AG04449 (cell line): ENCODE measurements at regions of chr5 and their contacts with region 1.

Region 1: GRCh38 chr5:181223058-181223728 is at the start of gene TRIM41:
- DNase-seq: peak; percentile 86
- H3K4me3 ChIP-seq: peak within 1 kb of the TSS; percentile 96
- CTCF ChIP-seq: no peak

Region 2: GRCh38 chr5:181191529-181192394 is 31.4 kb before region 1 on chr5:
- CTCF ChIA-PET with region 1: interaction called, 7 read pairs
- POLR2A ChIA-PET with region 1: interaction called, 14 read pairs
- DNase-seq: no peak
- H3K4me3 ChIP-seq: peak overlapping the region; percentile 90
- CTCF ChIP-seq: no peak

Region 3: GRCh38 chr5:181207214-181208107 is 15.7 kb before region 1 on chr5:
- CTCF ChIA-PET with region 1: interaction called, 4 read pairs
- POLR2A ChIA-PET with region 1: interaction called, 10 read pairs
- DNase-seq: peak; percentile 71
- H3K4me3 ChIP-seq: peak overlapping the region; percentile 57
- CTCF ChIP-seq: no peak

Region 4: DNA sequence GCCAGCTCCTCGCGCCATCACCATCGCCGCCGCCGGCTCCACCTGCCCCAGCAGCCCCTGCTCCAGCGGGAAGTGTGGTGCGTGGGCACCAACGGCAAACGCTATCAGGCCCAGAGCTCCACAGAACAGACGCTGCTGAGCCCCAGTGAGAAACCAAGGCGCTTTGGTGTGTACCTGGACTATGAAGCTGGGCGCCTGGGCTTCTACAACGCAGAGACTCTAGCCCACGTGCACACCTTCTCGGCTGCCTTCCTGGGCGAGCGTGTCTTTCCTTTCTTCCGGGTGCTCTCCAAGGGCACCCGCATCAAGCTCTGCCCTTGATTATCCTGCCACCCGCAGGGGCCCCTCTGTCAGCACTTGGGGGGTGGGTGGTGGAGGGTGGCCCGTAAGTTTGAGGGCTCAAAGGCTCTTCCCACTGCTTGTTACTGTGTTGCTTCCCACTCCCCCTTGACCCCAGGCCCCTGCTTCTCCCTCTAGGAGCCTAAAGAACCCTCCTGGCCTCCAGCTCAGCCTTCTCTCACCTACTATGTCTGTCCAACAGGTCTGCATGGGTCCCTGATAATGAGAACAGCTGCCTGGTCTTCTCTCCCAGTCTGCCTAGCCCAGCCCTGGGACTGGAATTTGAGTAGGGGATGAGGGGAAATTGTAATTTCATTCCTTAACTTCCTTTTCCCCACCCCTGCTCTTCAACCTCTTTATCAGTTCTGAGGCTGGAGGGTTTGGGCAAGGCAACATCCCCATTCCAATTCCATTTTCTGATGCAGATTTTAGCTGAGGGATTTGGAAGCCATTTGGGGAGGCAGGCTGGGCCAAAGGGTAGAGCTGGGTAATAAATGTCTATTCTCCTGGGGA is 11.5 kb after region 1 on chr5:
- CTCF ChIA-PET with region 1: no interaction called
- POLR2A ChIA-PET with region 1: interaction called, 40 read pairs
- DNase-seq: no peak
- H3K4me3 ChIP-seq: no peak overlapping the region
- CTCF ChIP-seq: no peak

Region 5: GRCh38 chr5:181243512-181244343 is 20.5 kb after region 1 on chr5 and contains the start of gene RACK1:
- CTCF ChIA-PET with region 1: no interaction called
- POLR2A ChIA-PET with region 1: interaction called, 15 read pairs
- DNase-seq: peak; percentile 41
- H3K4me3 ChIP-seq: peak within 1 kb of the TSS; percentile 98
- CTCF ChIP-seq: no peak

Region 6: DNA sequence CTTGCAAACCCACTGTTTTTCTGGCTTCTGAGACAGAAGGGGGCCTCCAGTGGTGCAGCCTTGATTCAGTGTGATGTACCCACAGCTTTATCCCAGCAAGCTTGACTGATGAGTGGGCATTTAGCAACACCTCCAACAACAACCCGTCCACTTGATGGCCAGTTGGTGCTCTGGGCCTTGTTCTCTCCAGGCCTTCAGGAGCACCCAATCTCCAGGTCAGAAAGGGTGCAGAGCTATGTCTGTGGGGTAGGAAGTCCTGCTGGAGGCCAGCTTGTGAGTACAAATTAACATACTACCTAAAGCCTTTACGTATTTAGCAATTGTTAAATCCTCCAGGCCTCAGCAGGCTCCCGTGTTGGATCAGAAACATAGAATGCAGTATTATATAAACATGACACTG is 47.9 kb after region 1 on chr5:
- CTCF ChIA-PET with region 1: no interaction called
- POLR2A ChIA-PET with region 1: no interaction called
- DNase-seq: no peak
- H3K4me3 ChIP-seq: no peak overlapping the region
- CTCF ChIP-seq: no peak